Activated CD8-positive, alpha-beta T cell treated with anti-CD3 and anti-CD28 coated beads, Interleukin-2, amount 10 ng/mL, durations not matched to agents 7 days and 5 days (primary cell): ENCODE measurements at regions of chr11 and their contacts with region 1.

Region 1: GRCh38 chr11:66466225-66467027 is at the start of gene PELI3:
- DNase-seq: peak; percentile 93
- ATAC-seq: peak; percentile 85
- H3K4me3 Mint-ChIP-seq: peak within 1 kb of the TSS; percentile 81
- H3K27ac Mint-ChIP-seq: peak within 1 kb of the TSS; percentile 78
- H3K4me1 Mint-ChIP-seq: peaks cover 48% of the 10 kb centered on the region
- H3K27me3 Mint-ChIP-seq: no peaks in the 10 kb centered on the region
- total RNA-seq, gene PELI3: 5.1 to 5.8 TPM

Region 2: GRCh38 chr11:66480117-66480938 is 13.9 kb after region 1 on chr11 and contains the start of gene DPP3:
- CTCF ChIA-PET with region 1: interaction called, 16 read pairs
- POLR2A ChIA-PET with region 1: interaction called, 22 read pairs
- DNase-seq: peak; percentile 98
- ATAC-seq: peak; percentile 98
- H3K4me3 Mint-ChIP-seq: peak within 1 kb of the TSS; percentile 92
- H3K27ac Mint-ChIP-seq: peak within 1 kb of the TSS; percentile 91
- H3K4me1 Mint-ChIP-seq: peaks cover 31% of the 10 kb centered on the region
- H3K27me3 Mint-ChIP-seq: no peaks in the 10 kb centered on the region
- total RNA-seq, gene DPP3: 73.3 to 79.1 TPM

Region 3: GRCh38 chr11:66592457-66593302 is 126.3 kb after region 1 on chr11 and contains the starts of genes CCDC87 and CCS:
- CTCF ChIA-PET with region 1: no interaction called
- POLR2A ChIA-PET with region 1: no interaction called
- DNase-seq: peak; percentile 99
- ATAC-seq: peak; percentile 97
- H3K4me3 Mint-ChIP-seq: peak within 1 kb of the TSS; percentile 100
- H3K27ac Mint-ChIP-seq: peak within 1 kb of the TSS; percentile 98
- H3K4me1 Mint-ChIP-seq: peaks cover 37% of the 10 kb centered on the region
- H3K27me3 Mint-ChIP-seq: no peaks in the 10 kb centered on the region
- total RNA-seq, gene CCDC87: 0.55 to 0.70 TPM
- total RNA-seq, gene CCS: 29.3 to 32.5 TPM

Region 4: GRCh38 chr11:66628061-66628603 is 161.7 kb after region 1 on chr11:
- CTCF ChIA-PET with region 1: no interaction called
- POLR2A ChIA-PET with region 1: no interaction called
- DNase-seq: no peak
- ATAC-seq: no peak
- H3K4me3 Mint-ChIP-seq: no peak overlapping the region
- H3K27ac Mint-ChIP-seq: no peak overlapping the region
- H3K4me1 Mint-ChIP-seq: peaks cover 28% of the 10 kb centered on the region
- H3K27me3 Mint-ChIP-seq: no peaks in the 10 kb centered on the region